ENCODE measurements at regions of chr21 and their contacts with region 1.

Region 1: DNA sequence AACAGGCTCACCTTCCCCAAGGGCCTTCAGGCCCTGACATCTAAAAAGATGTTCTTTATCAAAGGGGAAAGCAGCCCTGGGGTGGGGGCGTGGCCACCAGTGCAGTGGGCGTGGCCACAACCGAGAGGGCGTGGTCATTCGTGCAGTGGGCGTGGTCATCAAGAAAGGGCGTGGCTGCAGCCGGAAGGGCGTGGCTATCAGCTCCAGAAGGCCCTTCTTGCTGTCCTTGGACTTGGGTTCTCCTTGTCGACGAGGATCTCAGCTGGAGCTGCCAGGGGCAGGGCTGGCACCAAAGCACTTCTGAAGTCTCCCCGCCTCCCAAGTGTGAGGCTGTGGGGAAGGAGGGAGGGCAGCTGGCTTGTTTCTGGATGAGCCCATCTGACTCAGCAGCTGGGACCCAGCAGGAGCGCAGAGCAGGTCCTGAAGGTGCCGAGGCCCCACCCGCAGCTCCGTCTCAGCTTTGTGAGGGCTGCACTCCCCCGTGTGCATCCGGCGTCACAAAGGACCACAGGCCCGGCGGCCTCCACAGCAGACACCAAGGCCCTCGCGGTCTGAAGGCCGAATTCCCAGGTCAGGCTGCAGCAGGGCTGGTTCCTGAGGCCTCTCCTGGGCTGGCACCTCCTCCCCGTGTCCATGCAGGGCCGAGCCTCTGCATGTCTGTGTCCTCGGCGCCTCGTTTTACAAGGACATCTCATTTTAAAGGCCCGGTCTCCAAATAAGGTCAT is 12.8 kb downstream of the PDE9A start:
- DNase-seq: no peak
- ATAC-seq: no peak

Region 2: DNA sequence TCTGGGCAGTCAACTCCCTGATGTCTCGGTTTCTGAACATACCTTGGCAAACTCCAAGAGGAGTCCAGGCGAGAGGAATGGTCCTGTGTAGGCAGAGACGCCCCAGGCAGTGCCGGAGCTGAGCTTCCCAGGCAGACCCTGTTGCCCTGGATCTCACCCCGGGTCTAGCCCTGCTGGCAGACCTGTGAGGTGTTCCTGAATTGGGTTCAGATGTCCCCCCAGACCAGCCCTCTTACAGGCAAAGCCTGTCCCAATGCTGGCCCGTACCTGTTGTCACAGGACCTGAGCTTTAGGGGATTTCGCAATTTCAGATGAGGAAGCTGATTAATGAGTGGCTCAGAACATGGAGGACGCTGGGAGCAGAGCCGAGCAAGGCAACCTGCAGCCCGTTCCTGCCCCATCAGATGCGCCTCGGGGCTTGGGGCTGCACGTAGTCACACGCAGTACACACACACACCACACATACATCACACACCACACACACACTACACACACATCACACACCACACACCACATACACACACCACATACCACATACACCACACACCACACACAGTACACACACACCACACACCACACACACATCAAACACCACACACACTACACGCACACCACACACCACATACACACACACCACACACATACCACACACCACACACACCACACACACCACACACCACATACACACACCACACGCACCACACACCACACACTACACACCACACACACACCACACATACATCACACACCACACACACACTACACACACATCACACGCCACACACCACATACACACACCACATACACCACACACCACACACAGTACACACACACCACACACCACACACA is 51.1 kb before region 1 on chr21:
- intact Hi-C with region 1: loop called in 1 of 2 experiments (anchors 10 kb)
- DNase-seq: no peak
- ATAC-seq: no peak

Region 3: DNA sequence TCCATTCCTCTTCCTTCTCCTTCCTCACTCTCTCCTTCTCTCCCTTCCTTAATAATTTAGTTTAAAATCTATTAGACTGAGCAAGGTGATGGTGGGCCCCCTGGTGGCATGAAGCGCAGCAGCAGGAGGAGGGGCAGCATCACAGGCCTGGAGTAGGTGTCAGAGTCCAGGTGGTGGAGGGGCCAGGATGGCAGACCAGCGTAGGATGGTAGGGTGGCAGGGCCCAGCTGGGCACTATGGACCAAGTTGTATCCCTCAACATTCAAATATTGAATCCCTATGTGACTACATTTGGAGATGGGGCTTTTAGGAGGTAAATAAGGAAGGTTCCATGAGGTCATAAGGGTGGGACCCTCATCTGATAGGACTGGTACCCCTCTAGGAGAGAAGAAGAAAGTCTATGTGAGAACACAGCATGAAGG is 152.2 kb after region 1 on chr21:
- intact Hi-C with region 1: no loop called
- DNase-seq: peak; percentile 63
- ATAC-seq: peak; percentile 73

Region 4: DNA sequence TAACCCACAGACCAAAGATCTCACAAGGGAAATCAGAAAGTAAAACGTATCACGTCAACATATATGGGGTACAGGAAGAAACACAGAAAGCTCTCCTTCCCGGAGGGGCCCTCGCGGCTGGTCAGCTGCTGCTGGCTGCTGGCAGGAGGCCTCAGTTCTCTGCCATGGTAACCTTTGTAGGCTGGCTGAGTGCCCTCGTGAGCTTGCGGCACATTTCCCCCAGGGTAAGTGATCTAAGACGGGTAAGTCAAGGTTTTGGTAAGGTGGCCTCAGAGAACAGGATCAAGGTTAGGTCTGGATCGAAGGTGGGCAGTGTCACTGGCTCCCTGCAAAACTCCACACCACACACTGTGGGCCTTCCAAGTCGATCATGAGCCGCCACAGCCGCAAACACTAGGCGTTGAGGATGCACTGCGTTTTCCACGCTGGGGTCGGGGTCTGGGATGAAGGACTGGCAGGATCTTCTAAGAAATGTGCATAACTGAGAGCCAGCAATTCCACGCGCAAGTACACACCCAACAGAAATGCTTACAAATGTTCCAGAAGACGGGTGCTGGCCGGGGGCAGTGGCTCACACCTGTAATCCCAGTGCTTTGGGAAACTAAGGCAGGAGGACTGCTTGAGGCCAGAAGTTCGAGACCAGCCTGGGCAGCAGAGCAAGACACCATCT is 179.2 kb after region 1 on chr21:
- intact Hi-C with region 1: no loop called
- DNase-seq: no peak
- ATAC-seq: peak; percentile 55 to 83